ENCODE measurements at regions of chr2 and their contacts with region 1.

Region 1: GRCh38 chr2:219798430-219798829 is 171.0 kb downstream of the SLC4A3 start:
- DNase-seq: no peak
- ATAC-seq: no peak

Region 2: GRCh38 chr2:219783359-219783975 is 15.0 kb before region 1 on chr2:
- intact Hi-C with region 1: loop called (anchors 1 kb)
- DNase-seq: no peak
- ATAC-seq: peak; percentile 17